GM13976 (cell line): ENCODE measurements at regions of chr7 and their contacts with region 1.

Region 1: DNA sequence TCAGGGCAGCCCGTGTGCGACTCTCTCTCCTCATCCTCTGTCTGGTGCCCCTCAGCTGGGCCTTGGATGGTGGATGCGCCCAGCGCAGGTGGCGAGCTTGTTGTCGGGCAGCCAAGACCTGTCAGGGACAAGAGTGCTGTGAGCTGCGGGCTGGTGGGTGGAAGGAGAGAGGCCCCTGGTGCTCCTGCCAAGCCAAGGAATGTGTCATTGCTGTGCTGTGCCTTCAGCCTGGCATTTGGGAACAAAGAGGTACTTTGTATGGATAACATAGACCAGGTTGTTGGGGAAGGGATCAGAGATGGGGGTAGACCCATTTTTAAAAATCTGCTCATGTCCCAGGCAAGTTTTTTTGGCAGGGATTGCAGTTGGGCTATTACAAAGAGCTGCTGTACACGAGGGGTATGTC is 120.9 kb downstream of the PKD1L1 start:
- DNase-seq: no peak
- CTCF ChIP-seq: no peak

Region 2: DNA sequence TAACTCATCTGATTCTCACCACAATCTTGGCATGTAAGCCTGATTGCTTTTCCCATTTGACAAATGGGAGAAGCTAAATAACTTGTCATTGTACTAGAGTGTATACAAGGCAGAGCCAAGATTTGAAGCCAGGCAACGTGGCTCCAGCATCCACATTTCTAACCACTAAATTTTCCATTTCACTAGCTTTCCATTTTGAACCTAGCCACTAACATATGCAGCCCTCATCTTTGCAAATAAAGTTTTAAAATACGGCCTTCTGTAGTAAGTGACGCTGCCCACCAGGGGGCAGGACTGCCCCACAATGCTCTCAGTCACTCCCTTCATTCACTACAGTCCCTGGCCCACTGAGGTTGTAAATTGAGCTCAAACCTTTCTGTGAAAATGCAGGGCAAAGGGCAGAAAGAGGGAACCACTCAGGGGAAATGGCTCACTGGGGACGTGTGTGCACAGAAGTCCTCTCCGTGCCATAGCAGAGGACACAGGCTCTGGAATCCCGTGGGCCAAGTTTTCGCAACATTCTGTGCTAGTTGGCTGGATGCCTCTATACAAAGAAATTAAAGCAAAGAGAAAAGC is 561.1 kb before region 1 on chr7:
- in situ Hi-C with region 1: loop called (anchors 10 kb)
- DNase-seq: peak; percentile 65
- CTCF ChIP-seq: peak; percentile 81

Region 3: GRCh38 chr7:47661051-47661714 is 166.2 kb before region 1 on chr7:
- in situ Hi-C with region 1: no loop called
- DNase-seq: no peak
- CTCF ChIP-seq: no peak